HEK293 (cell line): ENCODE measurements at regions of chr1 and their contacts with region 1.

Region 1: DNA sequence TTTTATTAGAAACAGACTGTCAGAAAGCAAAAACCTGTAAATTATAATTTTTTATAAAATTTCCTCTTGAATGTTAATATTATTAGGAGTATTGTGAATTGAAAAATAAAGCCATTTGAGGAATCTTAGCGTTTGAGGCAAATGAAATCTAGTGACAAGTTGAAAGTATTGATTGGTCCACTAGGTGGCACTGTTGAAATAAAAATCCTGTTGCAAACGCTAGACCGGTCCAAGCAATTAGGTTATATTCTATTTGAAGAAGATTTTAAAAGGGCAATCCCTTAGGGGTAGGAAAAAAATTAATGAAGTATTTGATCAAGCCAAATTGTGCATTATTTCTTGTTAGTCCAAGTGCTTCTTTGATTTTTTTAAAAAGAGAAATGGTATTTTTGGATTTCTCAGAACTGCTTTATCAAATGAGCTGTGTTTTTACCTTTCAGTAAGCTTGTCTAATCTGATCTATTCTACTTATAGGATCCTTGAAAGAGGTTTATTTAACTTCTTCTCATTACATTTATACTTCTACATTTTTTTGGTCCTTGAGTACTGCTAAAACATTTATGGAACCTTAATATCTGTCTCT is 57.7 kb downstream of the ATG4C start:
- H3K4me3 ChIP-seq: no peak overlapping the region
- H3K27ac ChIP-seq: no peak overlapping the region
- H3K4me1 ChIP-seq: no peaks in the 10 kb centered on the region
- CTCF ChIP-seq: peak; percentile 33; the same call in 1 of the 2 replicates

Region 2: DNA sequence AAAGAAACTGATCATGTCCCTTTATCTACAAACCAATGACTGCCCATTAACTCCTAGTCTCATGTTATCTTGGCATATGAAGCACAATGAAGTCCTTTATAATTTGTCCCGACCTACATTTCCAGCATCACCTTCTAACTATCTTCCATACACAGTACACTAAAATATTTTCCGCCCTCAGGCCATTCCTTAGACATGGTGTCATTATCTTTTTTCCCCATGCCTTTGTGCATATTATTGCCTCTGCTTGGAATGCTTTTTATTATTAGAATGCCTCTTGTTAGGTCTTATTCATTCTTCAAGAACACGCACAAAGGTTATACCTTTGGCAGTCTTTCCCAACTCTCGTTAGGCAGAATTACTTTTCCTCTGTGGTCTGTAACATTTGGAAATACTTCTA is 18.1 kb before region 1 on chr1:
- CTCF ChIA-PET with region 1: interaction called, 21 read pairs
- POLR2A ChIA-PET with region 1: no interaction called
- H3K4me3 ChIP-seq: no peak overlapping the region
- H3K27ac ChIP-seq: no peak overlapping the region
- H3K4me1 ChIP-seq: no peaks in the 10 kb centered on the region
- CTCF ChIP-seq: no peak

Region 3: DNA sequence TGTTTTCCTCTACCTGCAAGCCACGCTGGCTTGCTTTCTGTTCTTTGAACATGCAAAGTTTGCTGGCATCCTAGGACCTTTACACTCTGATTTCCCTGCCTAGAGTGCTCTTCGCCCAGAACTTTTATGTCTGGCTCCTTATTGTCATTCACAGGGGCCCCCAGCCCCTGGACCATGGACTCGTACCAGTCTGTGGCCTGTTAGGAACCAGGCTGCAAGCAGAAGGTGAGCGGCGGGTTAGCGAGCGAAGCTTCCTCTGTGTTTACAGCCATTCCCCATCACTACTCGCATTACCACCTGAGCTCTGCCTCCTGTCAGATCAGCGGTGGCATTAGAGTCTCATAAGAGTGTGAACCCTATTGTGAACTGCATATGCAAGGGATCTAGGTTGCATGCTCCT is 15.3 kb after region 1 on chr1:
- CTCF ChIA-PET with region 1: interaction called, 34 read pairs
- POLR2A ChIA-PET with region 1: no interaction called
- H3K4me3 ChIP-seq: no peak overlapping the region
- H3K27ac ChIP-seq: no peak overlapping the region
- H3K4me1 ChIP-seq: no peaks in the 10 kb centered on the region
- CTCF ChIP-seq: no peak

Region 4: DNA sequence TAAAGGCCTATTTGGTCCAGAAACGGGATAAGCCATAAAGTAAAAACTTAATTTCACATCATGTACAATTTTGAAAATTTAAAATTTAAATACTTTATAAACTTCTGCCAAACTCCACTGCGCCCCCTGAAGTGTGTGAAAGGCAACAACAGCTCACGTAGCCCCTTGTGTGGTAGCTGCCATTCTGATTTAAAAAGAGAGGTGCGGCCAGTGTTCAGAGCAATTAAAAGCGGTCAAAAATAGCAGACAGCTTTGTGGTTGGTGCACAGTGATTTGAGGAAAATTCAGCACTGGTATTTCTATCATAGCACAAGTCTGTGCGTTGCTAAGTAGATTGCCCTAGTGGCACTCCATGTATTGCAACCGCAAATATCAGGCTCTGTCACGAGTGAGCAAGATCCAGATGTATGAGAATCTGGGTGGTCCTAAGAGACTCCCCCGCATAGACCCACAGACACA is 64.8 kb after region 1 on chr1:
- CTCF ChIA-PET with region 1: interaction called, 30 read pairs
- POLR2A ChIA-PET with region 1: no interaction called
- H3K4me3 ChIP-seq: no peak overlapping the region
- H3K27ac ChIP-seq: no peak overlapping the region
- H3K4me1 ChIP-seq: no peaks in the 10 kb centered on the region
- CTCF ChIP-seq: no peak

Region 5: DNA sequence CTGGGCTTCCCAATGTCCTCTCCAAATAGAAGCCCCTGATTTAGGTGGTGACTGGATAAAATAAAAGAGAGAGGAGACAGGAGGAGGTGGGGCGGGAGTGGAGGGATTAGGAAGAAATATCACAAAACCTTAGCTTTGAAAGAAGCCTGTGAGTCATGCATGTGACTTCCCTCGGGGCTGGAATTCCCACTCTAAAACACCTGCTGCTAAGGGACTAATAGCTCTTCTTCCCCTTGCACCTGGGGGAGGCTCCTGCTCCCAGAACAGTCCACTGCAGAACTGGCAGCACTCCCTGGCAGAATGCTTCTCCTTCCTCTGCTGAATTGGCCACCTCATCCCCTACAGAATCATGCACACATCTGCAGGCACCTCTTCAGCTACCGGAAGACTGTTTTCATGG is 149.5 kb after region 1 on chr1:
- CTCF ChIA-PET with region 1: interaction called, 12 read pairs
- POLR2A ChIA-PET with region 1: no interaction called
- H3K4me3 ChIP-seq: no peak overlapping the region
- H3K27ac ChIP-seq: no peak overlapping the region
- H3K4me1 ChIP-seq: no peaks in the 10 kb centered on the region
- CTCF ChIP-seq: no peak

Region 6: GRCh38 chr1:63537940-63538339 is 696.3 kb after region 1 on chr1:
- CTCF ChIA-PET with region 1: interaction called, 16 read pairs
- POLR2A ChIA-PET with region 1: no interaction called
- H3K4me3 ChIP-seq: no peak overlapping the region
- H3K27ac ChIP-seq: no peak overlapping the region
- H3K4me1 ChIP-seq: no peaks in the 10 kb centered on the region
- CTCF ChIP-seq: no peak